Activated naive CD4-positive, alpha-beta T cell treated with anti-CD3 and anti-CD28 coated beads for 36 hours (primary cell): ENCODE measurements at regions of chr10 and their contacts with region 1.

Region 1: DNA sequence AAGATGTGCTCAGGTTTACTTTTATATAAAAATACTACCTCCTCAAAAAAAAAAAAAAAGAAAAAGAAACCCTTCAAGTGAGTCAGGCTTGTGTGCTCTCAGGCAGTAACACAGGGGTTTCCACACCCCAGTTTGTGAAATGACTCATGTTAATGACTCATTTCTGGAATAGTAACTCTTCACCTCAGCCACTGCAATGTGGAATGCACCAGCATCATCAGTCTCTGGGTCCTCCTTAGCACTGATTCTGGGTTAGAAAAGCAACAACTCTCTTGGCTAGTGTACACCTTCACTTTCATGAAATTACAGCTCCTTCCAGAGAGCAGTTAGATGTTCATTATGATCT is 110.6 kb downstream of the EMX2 start:
- DNase-seq: peak; percentile 65
- H3K4me3 Mint-ChIP-seq: no peak overlapping the region
- H3K27ac Mint-ChIP-seq: no peak overlapping the region
- H3K4me1 Mint-ChIP-seq: peaks cover 25% of the 10 kb centered on the region
- H3K27me3 Mint-ChIP-seq: peaks cover 26% of the 10 kb centered on the region

Region 2: GRCh38 chr10:117597216-117597615 is 55.9 kb before region 1 on chr10:
- CTCF ChIA-PET with region 1: no interaction called
- intact Hi-C with region 1: no loop called
- DNase-seq: no peak
- H3K4me3 Mint-ChIP-seq: no peak overlapping the region
- H3K27ac Mint-ChIP-seq: no peak overlapping the region
- H3K4me1 Mint-ChIP-seq: no peaks in the 10 kb centered on the region
- H3K27me3 Mint-ChIP-seq: peaks cover 22% of the 10 kb centered on the region

Region 3: GRCh38 chr10:117663750-117664149 is 10.6 kb after region 1 on chr10:
- CTCF ChIA-PET with region 1: no interaction called
- intact Hi-C with region 1: loop called (anchors 1 kb)
- DNase-seq: peak; percentile 33
- H3K4me3 Mint-ChIP-seq: no peak overlapping the region
- H3K27ac Mint-ChIP-seq: no peak overlapping the region
- H3K4me1 Mint-ChIP-seq: peaks cover 2% of the 10 kb centered on the region
- H3K27me3 Mint-ChIP-seq: peaks cover 19% of the 10 kb centered on the region

Region 4: GRCh38 chr10:117830787-117831212 is 177.7 kb after region 1 on chr10:
- CTCF ChIA-PET with region 1: no interaction called
- intact Hi-C with region 1: loop called (anchors 5 kb)
- DNase-seq: peak; percentile 49
- H3K4me3 Mint-ChIP-seq: peak overlapping the region; percentile 68
- H3K27ac Mint-ChIP-seq: peak overlapping the region; percentile 82
- H3K4me1 Mint-ChIP-seq: peaks cover 12% of the 10 kb centered on the region
- H3K27me3 Mint-ChIP-seq: peaks cover 2% of the 10 kb centered on the region